Caco-2 (cell line): ENCODE measurements at regions of chr5 and their contacts with region 1.

Region 1: GRCh38 chr5:94893412-94894135 is 275.1 kb downstream of the SLF1 start:
- DNase-seq: no peak
- H3K4me3 ChIP-seq: no peak overlapping the region
- H3K4me3 Mint-ChIP-seq: no peak overlapping the region
- H3K27ac Mint-ChIP-seq: no peak overlapping the region
- H3K4me1 ChIP-seq: no peaks in the 10 kb centered on the region
- H3K4me1 Mint-ChIP-seq: no peaks in the 10 kb centered on the region
- H3K27me3 ChIP-seq: no peaks in the 10 kb centered on the region
- H3K27me3 Mint-ChIP-seq: peaks cover 12% of the 10 kb centered on the region
- CTCF ChIP-seq: peak in 1 of 2 experiments; percentile 16

Region 2: DNA sequence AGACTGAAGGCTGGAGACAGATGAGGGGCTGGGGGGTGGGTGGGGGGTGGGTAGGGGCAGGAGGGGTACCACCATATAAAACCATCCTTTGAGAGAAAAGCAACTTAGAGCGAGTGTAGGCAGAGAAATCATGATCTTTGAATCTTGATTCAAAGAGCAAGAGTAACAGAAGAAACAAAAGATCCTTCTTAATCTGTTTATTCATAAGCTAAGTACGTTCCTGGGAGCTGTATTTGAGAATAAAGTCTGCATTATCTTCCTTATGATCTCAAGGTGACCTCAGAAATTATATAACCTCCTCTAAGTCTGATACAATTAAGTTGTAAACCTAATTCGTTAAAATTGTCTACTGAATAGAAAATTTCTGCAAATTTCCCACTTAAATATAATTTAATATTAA is 1871.4 kb before region 1 on chr5:
- CTCF ChIA-PET with region 1: no interaction called
- POLR2A ChIA-PET with region 1: interaction called, 10 read pairs
- intact Hi-C with region 1: no loop called
- DNase-seq: no peak
- H3K4me3 ChIP-seq: no peak overlapping the region
- H3K4me3 Mint-ChIP-seq: no peak overlapping the region
- H3K27ac Mint-ChIP-seq: no peak overlapping the region
- H3K4me1 ChIP-seq: no peaks in the 10 kb centered on the region
- H3K4me1 Mint-ChIP-seq: no peaks in the 10 kb centered on the region
- H3K27me3 ChIP-seq: no peaks in the 10 kb centered on the region
- H3K27me3 Mint-ChIP-seq: no peaks in the 10 kb centered on the region
- CTCF ChIP-seq: no peak

Region 3: DNA sequence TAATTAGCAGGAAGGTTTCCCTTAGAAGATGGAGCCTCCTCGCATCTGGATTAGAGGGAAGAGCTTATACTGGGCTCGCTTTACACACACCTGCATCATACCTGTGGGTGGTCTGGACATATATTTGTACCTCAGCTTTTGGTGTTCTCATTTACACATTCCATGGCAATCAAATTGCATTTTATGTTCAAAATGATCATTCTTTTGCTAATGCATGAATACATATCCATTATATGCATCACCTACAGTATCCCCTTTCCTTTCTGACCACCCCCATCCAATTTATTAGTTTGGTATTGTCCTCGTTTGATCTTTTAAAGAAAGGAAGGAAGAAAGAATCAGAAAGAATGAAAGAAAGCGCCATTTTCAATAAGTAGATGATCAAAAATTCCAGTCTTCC is 23.7 kb before region 1 on chr5:
- CTCF ChIA-PET with region 1: no interaction called
- POLR2A ChIA-PET with region 1: no interaction called
- intact Hi-C with region 1: no loop called
- DNase-seq: no peak
- H3K4me3 ChIP-seq: no peak overlapping the region
- H3K4me3 Mint-ChIP-seq: no peak overlapping the region
- H3K27ac Mint-ChIP-seq: no peak overlapping the region
- H3K4me1 ChIP-seq: no peaks in the 10 kb centered on the region
- H3K4me1 Mint-ChIP-seq: no peaks in the 10 kb centered on the region
- H3K27me3 ChIP-seq: no peaks in the 10 kb centered on the region
- H3K27me3 Mint-ChIP-seq: peaks cover 1% of the 10 kb centered on the region
- CTCF ChIP-seq: no peak